Prostate gland (tissue), 2 donors: ENCODE measurements at regions of chr12 and their contacts with region 1.

Region 1: GRCh38 chr12:115817389-115817788 is 460.1 kb downstream of the MED13L start:
- DNase-seq: peak; percentile 75
- H3K4me3 ChIP-seq: no peak overlapping the region
- H3K27ac ChIP-seq: peak overlapping the region in 1 of 2 donors; percentile 60
- H3K4me1 ChIP-seq: no peaks in the 10 kb centered on the region
- H3K27me3 ChIP-seq: no peaks in the 10 kb centered on the region
- CTCF ChIP-seq: peak in 1 of 4 experiments; percentile 19
- POLR2A ChIP-seq: no peak

Region 2: GRCh38 chr12:115857160-115857922 is 40.0 kb after region 1 on chr12:
- intact Hi-C with region 1: loop called (anchors 5 kb)
- DNase-seq: no peak
- H3K4me3 ChIP-seq: no peak overlapping the region
- H3K27ac ChIP-seq: no peak overlapping the region
- H3K4me1 ChIP-seq: no peaks in the 10 kb centered on the region
- H3K27me3 ChIP-seq: no peaks in the 10 kb centered on the region
- CTCF ChIP-seq: no peak
- POLR2A ChIP-seq: no peak